PC-3 (cell line): ENCODE measurements at regions of chr17 and their contacts with region 1.

Region 1: DNA sequence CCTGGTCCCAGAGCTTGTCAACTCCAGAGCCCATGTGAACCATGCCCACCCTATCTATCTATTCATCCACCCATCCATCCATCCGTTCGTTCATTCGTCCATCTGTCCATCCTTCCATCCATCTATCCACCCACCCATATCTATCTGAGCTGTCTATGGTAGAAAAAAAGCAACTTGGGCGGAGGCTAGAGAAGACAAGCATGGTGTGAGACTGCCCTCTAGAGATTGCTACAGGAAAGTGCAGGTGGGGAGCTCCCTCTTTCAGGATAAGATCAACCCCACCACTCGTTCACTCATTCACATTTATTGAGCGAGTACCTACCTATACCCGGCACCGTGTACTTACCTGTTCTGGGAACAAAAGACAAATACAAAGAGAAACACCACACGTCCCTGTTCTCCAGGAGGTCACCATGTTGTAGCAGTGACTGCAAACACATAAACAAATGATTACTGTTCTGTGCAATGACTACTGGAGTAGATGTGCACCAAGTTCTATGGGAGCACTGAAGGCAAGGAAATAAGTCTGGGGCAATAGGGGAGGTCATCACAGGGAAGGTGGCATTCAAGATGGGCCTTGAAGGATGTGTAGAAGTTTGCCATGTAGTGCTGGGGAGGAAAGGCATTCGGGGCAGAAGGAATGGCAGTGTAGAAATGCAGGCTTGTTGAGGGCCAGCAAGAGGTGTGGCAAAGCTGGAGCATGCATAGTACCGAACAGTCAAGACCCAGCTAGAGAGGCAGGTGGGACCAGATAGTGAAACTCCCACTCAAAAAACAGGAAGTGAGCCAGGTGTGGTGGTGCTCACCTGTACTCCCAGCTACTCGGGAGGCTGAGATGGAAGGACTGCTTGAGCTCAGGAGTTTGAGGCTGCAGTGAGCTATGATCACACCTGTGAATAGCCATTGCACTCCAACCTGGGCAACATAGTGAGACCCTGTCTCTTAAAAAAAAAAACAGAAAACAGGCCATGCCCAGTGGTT is 13.4 kb upstream of the ATP5MC1 start:
- DNase-seq: peak; percentile 91
- ATAC-seq: peak; percentile 88
- H3K4me3 ChIP-seq: no peak overlapping the region
- H3K27ac ChIP-seq: no peak overlapping the region
- H3K4me1 ChIP-seq: no peaks in the 10 kb centered on the region
- H3K27me3 ChIP-seq: no peaks in the 10 kb centered on the region
- CTCF ChIP-seq: peak; percentile 99

Region 2: GRCh38 chr17:48505787-48506645 is 373.2 kb before region 1 on chr17:
- CTCF ChIA-PET with region 1: no interaction called
- POLR2A ChIA-PET with region 1: no interaction called
- intact Hi-C with region 1: no loop called
- DNase-seq: peak; percentile 99
- ATAC-seq: peak; percentile 97
- H3K4me3 ChIP-seq: no peak overlapping the region
- H3K27ac ChIP-seq: peak overlapping the region; percentile 88
- H3K4me1 ChIP-seq: peaks cover 41% of the 10 kb centered on the region
- H3K27me3 ChIP-seq: no peaks in the 10 kb centered on the region
- CTCF ChIP-seq: peak; percentile 51

Region 3: DNA sequence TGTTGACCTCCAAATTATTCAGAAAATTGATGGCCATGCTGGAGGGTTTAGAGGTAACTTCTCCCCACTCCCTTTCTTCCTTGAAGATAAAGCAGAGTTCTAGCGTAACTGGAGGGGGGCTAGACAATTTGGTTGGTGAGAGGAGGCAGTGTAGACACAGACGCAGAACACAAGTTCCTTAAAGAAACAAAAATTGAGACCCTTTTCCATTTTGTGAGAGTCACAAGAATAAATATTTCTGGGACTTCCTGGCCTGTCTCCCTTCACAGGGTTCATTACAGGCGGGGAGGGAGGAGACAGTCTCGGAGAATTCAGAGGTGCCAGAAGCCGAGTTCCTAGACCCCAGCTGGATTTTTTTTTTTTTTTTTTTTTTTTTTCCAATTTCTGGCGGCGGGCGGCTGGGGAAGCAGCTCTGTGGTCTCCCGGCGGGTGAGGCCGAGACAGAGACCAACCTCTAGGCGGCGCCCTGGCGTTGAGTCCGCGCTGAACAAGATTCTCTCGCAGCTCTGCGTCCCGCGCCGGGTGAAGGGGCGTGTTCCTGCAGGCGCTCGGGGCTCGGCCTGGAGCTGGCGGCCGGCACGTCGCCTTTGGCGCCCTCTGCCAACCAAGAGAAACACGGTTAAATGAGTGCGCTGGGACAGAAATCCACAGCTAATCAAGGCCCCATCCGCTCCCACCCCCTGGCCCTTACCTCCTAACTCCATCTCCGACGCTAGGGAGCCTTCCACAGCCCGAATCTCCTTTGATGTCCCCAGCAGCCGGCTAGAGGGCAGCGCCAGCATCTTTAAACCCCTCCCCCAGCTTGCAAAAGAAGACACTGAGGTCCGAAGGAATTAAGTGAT is 242.8 kb before region 1 on chr17:
- CTCF ChIA-PET with region 1: interaction called, 11 read pairs
- POLR2A ChIA-PET with region 1: no interaction called
- intact Hi-C with region 1: no loop called
- DNase-seq: peak; percentile 84
- ATAC-seq: peak; percentile 85
- H3K4me3 ChIP-seq: peak overlapping the region; percentile 25; the same call in 1 of the 2 replicates
- H3K27ac ChIP-seq: no peak overlapping the region
- H3K4me1 ChIP-seq: peaks cover 13% of the 10 kb centered on the region; the same call in 1 of the 2 replicates
- H3K27me3 ChIP-seq: peaks cover 9% of the 10 kb centered on the region
- CTCF ChIP-seq: peak; percentile 81

Region 4: GRCh38 chr17:48678141-48678971 is 200.9 kb before region 1 on chr17:
- CTCF ChIA-PET with region 1: interaction called, 33 read pairs
- POLR2A ChIA-PET with region 1: interaction called, 3 read pairs
- intact Hi-C with region 1: loop called (anchors 1 kb)
- DNase-seq: peak; percentile 90
- ATAC-seq: peak; percentile 91
- H3K4me3 ChIP-seq: peak overlapping the region; percentile 68
- H3K27ac ChIP-seq: no peak overlapping the region
- H3K4me1 ChIP-seq: peaks cover 11% of the 10 kb centered on the region; the same call in 1 of the 2 replicates
- H3K27me3 ChIP-seq: no peaks in the 10 kb centered on the region
- CTCF ChIP-seq: peak; percentile 100

Region 5: DNA sequence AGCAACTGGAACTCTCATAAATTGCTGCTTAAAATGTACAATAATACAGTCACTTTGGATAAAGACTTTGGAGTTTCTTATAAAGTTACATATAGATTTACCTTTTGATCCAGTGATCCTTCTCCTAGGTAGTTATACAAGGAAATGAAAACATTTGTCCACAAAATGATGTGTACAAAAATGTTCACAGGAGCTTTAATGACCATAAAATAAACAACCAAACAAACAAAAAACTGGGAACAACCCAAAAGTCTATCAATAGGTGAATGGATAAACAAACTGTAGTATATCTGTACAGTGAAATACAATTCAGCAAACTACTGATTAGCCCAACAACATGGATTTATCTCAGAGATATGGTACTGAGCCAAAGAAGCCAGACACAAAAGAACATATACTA is 99.8 kb before region 1 on chr17:
- CTCF ChIA-PET with region 1: no interaction called
- POLR2A ChIA-PET with region 1: no interaction called
- intact Hi-C with region 1: no loop called
- DNase-seq: no peak
- ATAC-seq: no peak
- H3K4me3 ChIP-seq: no peak overlapping the region
- H3K27ac ChIP-seq: no peak overlapping the region
- H3K4me1 ChIP-seq: no peaks in the 10 kb centered on the region
- H3K27me3 ChIP-seq: no peaks in the 10 kb centered on the region
- CTCF ChIP-seq: no peak

Region 6: GRCh38 chr17:48804925-48805411 is 74.2 kb before region 1 on chr17:
- CTCF ChIA-PET with region 1: interaction called, 63 read pairs
- POLR2A ChIA-PET with region 1: interaction called, 6 read pairs
- intact Hi-C with region 1: loop called (anchors 1 kb)
- DNase-seq: peak; percentile 88
- ATAC-seq: peak; percentile 98
- H3K4me3 ChIP-seq: peak overlapping the region; percentile 22; the same call in 1 of the 2 replicates
- H3K27ac ChIP-seq: no peak overlapping the region
- H3K4me1 ChIP-seq: peaks cover 3% of the 10 kb centered on the region; the same call in 1 of the 2 replicates
- H3K27me3 ChIP-seq: no peaks in the 10 kb centered on the region
- CTCF ChIP-seq: peak; percentile 99

Region 7: GRCh38 chr17:48892940-48893645 is 13.9 kb after region 1 on chr17:
- CTCF ChIA-PET with region 1: interaction called, 10 read pairs
- POLR2A ChIA-PET with region 1: no interaction called
- intact Hi-C with region 1: no loop called
- DNase-seq: no peak
- ATAC-seq: no peak
- H3K4me3 ChIP-seq: peak overlapping the region; percentile 95
- H3K27ac ChIP-seq: peak overlapping the region; percentile 69
- H3K4me1 ChIP-seq: peaks cover 29% of the 10 kb centered on the region
- H3K27me3 ChIP-seq: no peaks in the 10 kb centered on the region
- CTCF ChIP-seq: no peak